ENCODE measurements at regions of chr7 and their contacts with region 1.

Region 1: GRCh38 chr7:38908759-38909335 is at the start of gene VPS41:
- DNase-seq: peak; percentile 61 to 91 (median 72)
- ATAC-seq: peak; percentile 99
- H3K4me3 ChIP-seq: peak within 1 kb of the TSS; percentile 94
- H3K4me3 Mint-ChIP-seq: peak within 1 kb of the TSS; percentile 98
- H3K27ac ChIP-seq: no peak within 1 kb of the TSS
- H3K27ac Mint-ChIP-seq: peak within 1 kb of the TSS; percentile 84
- H3K4me1 ChIP-seq: peaks cover 7% of the 10 kb centered on the region
- H3K4me1 Mint-ChIP-seq: peaks cover 40% of the 10 kb centered on the region
- H3K27me3 ChIP-seq: no peaks in the 10 kb centered on the region
- H3K27me3 Mint-ChIP-seq: no peaks in the 10 kb centered on the region
- CTCF ChIP-seq: no peak
- total RNA-seq, gene VPS41: 19.4 to 22.9 TPM

Region 2: GRCh38 chr7:38178004-38178694 is 730.7 kb before region 1 on chr7 and contains the start of gene STARD3NL:
- CTCF ChIA-PET with region 1: no interaction called
- POLR2A ChIA-PET with region 1: no interaction called
- intact Hi-C with region 1: loop called in 1 of 2 experiments (anchors 10 kb)
- DNase-seq: peak; percentile 69 to 98 (median 84)
- ATAC-seq: peak; percentile 94
- H3K4me3 ChIP-seq: peak within 1 kb of the TSS; percentile 88
- H3K4me3 Mint-ChIP-seq: peak within 1 kb of the TSS; percentile 98
- H3K27ac ChIP-seq: peak within 1 kb of the TSS; percentile 82 to 85
- H3K27ac Mint-ChIP-seq: peak within 1 kb of the TSS; percentile 91
- H3K4me1 ChIP-seq: peaks cover 4% of the 10 kb centered on the region
- H3K4me1 Mint-ChIP-seq: peaks cover 40% of the 10 kb centered on the region
- H3K27me3 ChIP-seq: no peaks in the 10 kb centered on the region
- H3K27me3 Mint-ChIP-seq: peaks cover 14% of the 10 kb centered on the region
- CTCF ChIP-seq: no peak
- total RNA-seq, gene STARD3NL: 14.4 to 15.7 TPM

Region 3: DNA sequence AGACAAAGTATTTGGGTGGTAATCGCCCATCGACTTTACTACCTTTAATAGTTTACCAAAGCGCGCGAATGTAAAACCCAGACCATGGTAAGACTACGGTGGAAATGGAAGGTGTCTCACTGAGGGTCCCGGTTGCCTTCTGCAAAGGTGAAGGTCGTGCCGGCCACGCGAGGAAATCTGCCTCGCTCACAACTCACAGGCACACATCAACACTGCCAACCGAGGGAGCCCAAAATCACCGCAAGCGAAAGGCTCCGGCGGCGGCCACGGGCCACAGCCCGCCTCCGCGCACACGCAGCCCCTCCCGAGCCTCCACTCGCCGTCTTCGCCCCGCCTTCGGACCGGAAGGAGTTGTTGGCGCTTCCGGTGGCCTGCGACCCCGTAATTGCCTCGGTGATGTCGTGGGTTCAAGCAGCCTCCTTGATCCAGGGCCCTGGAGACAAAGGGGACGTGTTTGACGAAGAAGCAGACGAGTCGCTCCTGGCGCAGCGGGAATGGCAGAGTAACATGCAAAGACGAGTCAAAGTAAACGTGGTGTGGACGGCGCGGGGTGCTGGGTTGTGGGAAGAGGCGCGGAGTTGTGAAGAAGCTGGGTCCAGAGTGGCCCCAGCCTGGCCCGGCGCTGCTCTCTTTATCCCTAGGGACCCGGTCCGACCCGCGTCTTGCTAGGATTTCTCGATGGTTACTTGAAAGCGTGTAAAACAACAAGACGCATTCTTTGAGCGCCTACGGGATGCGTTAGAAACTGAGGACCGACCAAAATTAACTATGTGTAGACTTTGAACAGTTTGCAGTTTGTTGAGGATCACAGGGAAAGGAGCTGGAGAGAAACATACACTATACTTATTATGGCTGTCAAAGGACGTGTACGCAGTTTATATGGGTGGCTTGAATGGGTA is 657.4 kb after region 1 on chr7 and contains the start of gene YAE1:
- CTCF ChIA-PET with region 1: no interaction called
- POLR2A ChIA-PET with region 1: no interaction called
- intact Hi-C with region 1: loop called in 1 of 2 experiments (anchors 10 kb)
- DNase-seq: peak; percentile 56 to 88 (median 76)
- ATAC-seq: peak; percentile 87
- H3K4me3 ChIP-seq: peak within 1 kb of the TSS; percentile 75
- H3K4me3 Mint-ChIP-seq: peak within 1 kb of the TSS; percentile 99
- H3K27ac ChIP-seq: peak within 1 kb of the TSS; percentile 47 to 58
- H3K27ac Mint-ChIP-seq: peak within 1 kb of the TSS; percentile 90
- H3K4me1 ChIP-seq: peaks cover 7% of the 10 kb centered on the region
- H3K4me1 Mint-ChIP-seq: peaks cover 32% of the 10 kb centered on the region
- H3K27me3 ChIP-seq: no peaks in the 10 kb centered on the region
- H3K27me3 Mint-ChIP-seq: no peaks in the 10 kb centered on the region
- CTCF ChIP-seq: no peak
- total RNA-seq, gene YAE1: 5.0 to 7.4 TPM